Naive thymus-derived CD4-positive, alpha-beta T cell (primary cell): ENCODE measurements at regions of chr5 and their contacts with region 1.

Region 1: GRCh38 chr5:151223469-151224264 is at the start of gene CCDC69:
- DNase-seq: peak; percentile 27 to 64 (median 47)
- ATAC-seq: peak; percentile 69
- H3K4me3 ChIP-seq: peak within 1 kb of the TSS; percentile 95
- H3K4me3 Mint-ChIP-seq: peak within 1 kb of the TSS; percentile 80 to 97 (median 92)
- H3K27ac ChIP-seq: peak within 1 kb of the TSS; percentile 93
- H3K27ac Mint-ChIP-seq: peak within 1 kb of the TSS; percentile 87 to 98 (median 98)
- H3K4me1 ChIP-seq: peaks cover 51 to 56% of the 10 kb centered on the region in 2 donors
- H3K4me1 Mint-ChIP-seq: peaks cover 48 to 67% (median 60%) of the 10 kb centered on the region in 7 donors
- H3K27me3 ChIP-seq: no peaks in the 10 kb centered on the region
- H3K27me3 Mint-ChIP-seq: no peaks in the 10 kb centered on the region
- total RNA-seq, gene CCDC69: 63.6 to 104 (median 94.1) TPM

Region 2: DNA sequence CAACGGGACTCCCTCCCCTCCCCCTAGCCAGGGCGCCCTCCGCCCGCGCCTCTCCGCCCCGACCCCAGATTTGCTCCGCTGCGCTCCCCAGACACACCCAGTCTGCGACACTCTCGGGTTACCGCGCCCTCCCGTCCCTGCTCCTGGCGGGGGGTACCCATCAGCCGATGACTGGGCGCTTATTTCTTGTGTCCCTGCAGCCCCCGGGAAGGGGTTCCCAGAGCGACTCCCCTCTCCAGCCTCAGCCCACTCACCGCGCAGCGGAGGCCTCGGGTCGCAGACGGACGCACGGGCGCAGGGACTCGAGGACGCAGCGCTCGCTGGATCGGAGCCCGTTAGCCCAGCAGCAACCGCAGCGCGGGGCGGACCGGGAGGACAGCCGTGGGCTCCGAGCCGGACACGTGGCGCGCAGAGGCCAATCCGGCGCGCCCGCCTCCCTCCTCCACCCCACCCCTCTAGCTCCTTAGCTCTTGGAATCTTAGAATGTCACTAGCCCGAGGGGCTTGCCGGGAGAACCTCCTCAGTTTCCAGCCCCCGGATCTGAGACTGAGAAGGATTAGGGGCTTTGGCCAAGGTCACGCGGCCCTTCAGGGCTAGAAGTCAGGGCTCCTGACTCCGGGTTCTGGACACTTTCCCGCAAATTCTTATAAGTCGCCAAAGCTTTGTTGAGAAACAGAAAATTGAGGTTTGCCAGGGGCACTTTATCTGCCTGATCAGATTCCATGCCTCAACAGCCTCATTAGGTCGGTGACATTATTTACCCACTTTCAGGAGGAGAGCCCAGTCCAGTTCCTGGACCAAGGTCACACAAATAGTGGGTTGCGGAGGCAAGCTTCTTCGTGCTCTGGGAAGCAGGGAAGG is 66.0 kb before region 1 on chr5 and contains the start of gene ANXA6:
- CTCF ChIA-PET with region 1: interaction called, 3 read pairs
- POLR2A ChIA-PET with region 1: interaction called, 4 read pairs
- intact Hi-C with region 1: loop called in 1 of 2 experiments (anchors 2 kb)
- DNase-seq: peak; percentile 48 to 79 (median 57)
- ATAC-seq: peak; percentile 92
- H3K4me3 ChIP-seq: peak within 1 kb of the TSS; percentile 85
- H3K4me3 Mint-ChIP-seq: peak within 1 kb of the TSS; percentile 94 to 99 (median 96)
- H3K27ac ChIP-seq: peak within 1 kb of the TSS; percentile 92
- H3K27ac Mint-ChIP-seq: peak within 1 kb of the TSS; percentile 90 to 99 (median 96)
- H3K4me1 ChIP-seq: peaks cover 36 to 44% of the 10 kb centered on the region in 2 donors
- H3K4me1 Mint-ChIP-seq: peaks cover 39 to 69% (median 57%) of the 10 kb centered on the region in 7 donors
- H3K27me3 ChIP-seq: no peaks in the 10 kb centered on the region
- H3K27me3 Mint-ChIP-seq: no peaks in the 10 kb centered on the region
- total RNA-seq, gene ANXA6: 212 to 512 (median 272) TPM

Region 3: DNA sequence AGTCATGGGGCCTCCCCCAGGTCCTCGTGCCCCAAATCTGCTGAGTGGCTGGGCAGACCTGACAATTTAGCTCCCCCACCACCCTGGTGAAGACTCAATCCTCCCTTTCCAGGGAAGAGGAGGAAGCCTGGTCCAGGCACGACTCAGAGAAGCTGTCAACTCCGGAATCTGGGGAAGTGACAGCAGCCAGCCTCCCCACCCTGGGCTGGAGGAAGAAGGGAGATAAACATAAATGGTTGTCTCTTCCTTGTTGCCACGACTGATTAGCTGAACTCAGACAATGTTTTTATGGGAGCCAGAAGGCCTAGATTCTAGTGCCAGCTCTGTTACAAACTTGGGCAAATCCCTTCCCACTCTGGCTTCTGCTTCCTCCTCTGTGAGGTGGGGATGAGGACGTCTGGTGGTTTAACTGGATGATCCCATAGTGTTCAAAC is 15.2 kb before region 1 on chr5:
- CTCF ChIA-PET with region 1: interaction called, 19 read pairs
- POLR2A ChIA-PET with region 1: interaction called, 184 read pairs
- intact Hi-C with region 1: loop called in 1 of 2 experiments (anchors 2 kb)
- DNase-seq: no peak
- ATAC-seq: no peak
- H3K4me3 ChIP-seq: no peak overlapping the region
- H3K4me3 Mint-ChIP-seq: peak overlapping the region in 7 of 10 donors; percentile 10 to 80 (median 51)
- H3K27ac ChIP-seq: peak overlapping the region; percentile 50
- H3K27ac Mint-ChIP-seq: peak overlapping the region; percentile 81 to 94 (median 88)
- H3K4me1 ChIP-seq: peaks cover 42 to 57% of the 10 kb centered on the region in 2 donors
- H3K4me1 Mint-ChIP-seq: peaks cover 48 to 81% (median 71%) of the 10 kb centered on the region in 7 donors
- H3K27me3 ChIP-seq: no peaks in the 10 kb centered on the region
- H3K27me3 Mint-ChIP-seq: no peaks in the 10 kb centered on the region

Region 4: GRCh38 chr5:151298063-151298855 is 74.6 kb after region 1 on chr5:
- CTCF ChIA-PET with region 1: no interaction called
- POLR2A ChIA-PET with region 1: no interaction called
- intact Hi-C with region 1: loop called in 1 of 2 experiments (anchors 5 kb)
- DNase-seq: peak in 3 of 9 donors; percentile 10 to 21 (median 14)
- ATAC-seq: no peak
- H3K4me3 ChIP-seq: no peak overlapping the region
- H3K4me3 Mint-ChIP-seq: no peak overlapping the region
- H3K27ac ChIP-seq: no peak overlapping the region
- H3K27ac Mint-ChIP-seq: no peak overlapping the region
- H3K4me1 ChIP-seq: no peaks in the 10 kb centered on the region
- H3K4me1 Mint-ChIP-seq: peaks cover 0 to 9% (median 0%) of the 10 kb centered on the region in 7 donors
- H3K27me3 ChIP-seq: no peaks in the 10 kb centered on the region
- H3K27me3 Mint-ChIP-seq: peaks cover 8 to 35% (median 26%) of the 10 kb centered on the region in 5 donors